ENCODE measurements at regions of chr17 and their contacts with region 1.

Region 1: GRCh38 chr17:27245230-27245696 is 48.7 kb upstream of the WSB1 start:
- DNase-seq: peak; percentile 87 to 89
- ATAC-seq: peak; percentile 91 to 97 (median 94)
- H3K4me3 ChIP-seq: peak overlapping the region in 6 of 10 donors; percentile 7 to 30 (median 22)
- H3K27ac ChIP-seq: peak overlapping the region; percentile 77 to 94 (median 84)
- H3K4me1 ChIP-seq: peaks cover 12 to 75% (median 46%) of the 10 kb centered on the region in 9 donors
- H3K27me3 ChIP-seq: no peaks in the 10 kb centered on the region
- CTCF ChIP-seq: peak; percentile 43 to 93 (median 81)

Region 2: GRCh38 chr17:27293898-27294688 is 48.8 kb after region 1 on chr17 and contains the start of gene WSB1:
- intact Hi-C with region 1: loop called in 9 of 10 experiments (anchors 2 to 10 kb)
- DNase-seq: peak; percentile 93 to 95
- ATAC-seq: peak; percentile 96 to 98 (median 98)
- H3K4me3 ChIP-seq: peak within 1 kb of the TSS; percentile 77 to 98 (median 92)
- H3K27ac ChIP-seq: peak within 1 kb of the TSS; percentile 87 to 100 (median 100)
- H3K4me1 ChIP-seq: peaks cover 3 to 45% (median 36%) of the 10 kb centered on the region in 9 donors
- H3K27me3 ChIP-seq: no peaks in the 10 kb centered on the region
- CTCF ChIP-seq: peak in 1 of 9 donors; percentile 12
- total RNA-seq, gene WSB1: 50.0 to 94.2 (median 60.5) TPM

Region 3: GRCh38 chr17:27332485-27333409 is 87.5 kb after region 1 on chr17:
- intact Hi-C with region 1: loop called in 9 of 10 experiments (anchors 1 to 2 kb)
- DNase-seq: peak; percentile 99
- ATAC-seq: peak; percentile 94 to 99 (median 97)
- H3K4me3 ChIP-seq: peak overlapping the region in 9 of 10 donors; percentile 23 to 62 (median 55)
- H3K27ac ChIP-seq: peak overlapping the region; percentile 87 to 99 (median 93)
- H3K4me1 ChIP-seq: peaks cover 3 to 37% (median 24%) of the 10 kb centered on the region in 9 donors
- H3K27me3 ChIP-seq: no peaks in the 10 kb centered on the region
- CTCF ChIP-seq: peak; percentile 81 to 99 (median 94)

Region 4: DNA sequence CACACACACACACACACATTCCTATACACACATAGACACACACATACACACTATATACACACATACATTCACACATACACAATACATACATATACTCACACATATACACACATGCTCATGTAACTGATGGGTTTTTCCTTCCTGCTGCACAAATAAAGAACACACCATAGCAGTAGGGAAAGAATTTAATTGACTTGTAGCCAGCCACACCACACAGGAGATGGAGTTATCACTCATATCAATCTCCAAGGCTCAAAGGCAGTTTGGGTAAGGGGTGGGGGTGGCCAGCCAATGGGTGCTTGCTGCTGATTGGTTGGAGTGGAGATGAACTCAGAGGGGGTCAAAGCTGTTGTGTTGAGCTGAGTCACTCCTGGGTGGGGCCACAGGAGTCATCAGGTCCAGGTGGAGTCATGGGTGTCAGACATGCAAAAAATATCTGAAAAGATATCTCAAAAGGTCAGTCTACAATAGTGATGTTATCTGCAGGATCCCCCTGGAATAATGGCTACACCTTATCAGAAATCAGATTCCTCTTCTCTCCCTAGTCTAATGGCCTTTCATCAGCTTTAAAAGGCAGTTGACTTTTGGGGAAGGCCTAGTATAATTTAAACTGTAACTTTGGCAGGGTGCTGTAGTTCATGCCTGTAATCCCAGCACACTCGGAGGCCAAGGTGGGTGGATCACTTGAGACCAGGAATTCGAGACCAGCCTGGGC is 94.7 kb after region 1 on chr17:
- intact Hi-C with region 1: loop called in 1 of 10 experiments (anchors 5 kb)
- DNase-seq: no peak
- ATAC-seq: peak in 1 of 8 donors; percentile 46
- H3K4me3 ChIP-seq: no peak overlapping the region
- H3K27ac ChIP-seq: peak overlapping the region in 1 of 10 donors; percentile 36
- H3K4me1 ChIP-seq: peaks cover 6 to 49% (median 34%) of the 10 kb centered on the region in 9 donors
- H3K27me3 ChIP-seq: no peaks in the 10 kb centered on the region
- CTCF ChIP-seq: no peak

Region 5: GRCh38 chr17:27367121-27367991 is 122.1 kb after region 1 on chr17:
- intact Hi-C with region 1: loop called in 1 of 10 experiments (anchors 10 kb)
- DNase-seq: no peak
- ATAC-seq: peak in 1 of 8 donors; percentile 65
- H3K4me3 ChIP-seq: no peak overlapping the region
- H3K27ac ChIP-seq: no peak overlapping the region
- H3K4me1 ChIP-seq: peaks cover 0 to 18% (median 0%) of the 10 kb centered on the region in 9 donors
- H3K27me3 ChIP-seq: no peaks in the 10 kb centered on the region
- CTCF ChIP-seq: no peak

Region 6: GRCh38 chr17:27396941-27397340 is 151.7 kb after region 1 on chr17:
- intact Hi-C with region 1: no loop called
- DNase-seq: no peak
- ATAC-seq: peak in 6 of 8 donors; percentile 44 to 61 (median 49)
- H3K4me3 ChIP-seq: no peak overlapping the region
- H3K27ac ChIP-seq: peak overlapping the region in 1 of 10 donors; percentile 1
- H3K4me1 ChIP-seq: peaks cover 0 to 24% (median 0%) of the 10 kb centered on the region in 9 donors
- H3K27me3 ChIP-seq: no peaks in the 10 kb centered on the region
- CTCF ChIP-seq: no peak

Measured in heart right ventricle (tissue), 16 donors.